Psoas muscle (tissue), 8 donors: ENCODE measurements at regions of chr10 and their contacts with region 1.

Region 1: GRCh38 chr10:57211161-57211560 is 850.1 kb upstream of the ZWINT start:
- DNase-seq: no peak
- ATAC-seq: no peak
- H3K4me3 ChIP-seq: no peak overlapping the region
- H3K27ac ChIP-seq: no peak overlapping the region
- H3K4me1 ChIP-seq: no peaks in the 10 kb centered on the region
- H3K27me3 ChIP-seq: no peaks in the 10 kb centered on the region
- CTCF ChIP-seq: no peak

Region 2: DNA sequence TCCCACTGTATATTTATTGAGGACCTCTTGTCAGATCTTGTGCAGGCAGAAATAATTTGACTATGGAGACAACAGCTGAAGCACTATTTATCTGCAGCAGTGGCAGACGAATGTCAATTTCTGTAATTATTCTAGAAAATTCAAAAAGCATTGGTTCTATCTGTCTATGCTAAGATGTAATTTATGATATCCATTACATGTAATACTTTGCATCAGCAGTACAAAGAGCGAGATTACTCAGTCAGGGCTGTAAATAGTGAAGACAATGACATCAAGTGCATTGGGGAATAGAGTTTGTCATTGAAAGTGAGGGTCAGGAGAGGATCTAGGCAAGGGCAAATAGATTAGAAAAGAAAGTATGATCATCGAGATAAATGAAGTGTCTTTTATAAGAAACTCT is 1358.3 kb before region 1 on chr10:
- intact Hi-C with region 1: loop called in 1 of 2 experiments (anchors 5 kb)
- DNase-seq: no peak
- ATAC-seq: no peak
- H3K4me3 ChIP-seq: no peak overlapping the region
- H3K27ac ChIP-seq: no peak overlapping the region
- H3K4me1 ChIP-seq: no peaks in the 10 kb centered on the region
- H3K27me3 ChIP-seq: no peaks in the 10 kb centered on the region
- CTCF ChIP-seq: no peak